ENCODE measurements at regions of chr4 and their contacts with region 1.

Region 1: DNA sequence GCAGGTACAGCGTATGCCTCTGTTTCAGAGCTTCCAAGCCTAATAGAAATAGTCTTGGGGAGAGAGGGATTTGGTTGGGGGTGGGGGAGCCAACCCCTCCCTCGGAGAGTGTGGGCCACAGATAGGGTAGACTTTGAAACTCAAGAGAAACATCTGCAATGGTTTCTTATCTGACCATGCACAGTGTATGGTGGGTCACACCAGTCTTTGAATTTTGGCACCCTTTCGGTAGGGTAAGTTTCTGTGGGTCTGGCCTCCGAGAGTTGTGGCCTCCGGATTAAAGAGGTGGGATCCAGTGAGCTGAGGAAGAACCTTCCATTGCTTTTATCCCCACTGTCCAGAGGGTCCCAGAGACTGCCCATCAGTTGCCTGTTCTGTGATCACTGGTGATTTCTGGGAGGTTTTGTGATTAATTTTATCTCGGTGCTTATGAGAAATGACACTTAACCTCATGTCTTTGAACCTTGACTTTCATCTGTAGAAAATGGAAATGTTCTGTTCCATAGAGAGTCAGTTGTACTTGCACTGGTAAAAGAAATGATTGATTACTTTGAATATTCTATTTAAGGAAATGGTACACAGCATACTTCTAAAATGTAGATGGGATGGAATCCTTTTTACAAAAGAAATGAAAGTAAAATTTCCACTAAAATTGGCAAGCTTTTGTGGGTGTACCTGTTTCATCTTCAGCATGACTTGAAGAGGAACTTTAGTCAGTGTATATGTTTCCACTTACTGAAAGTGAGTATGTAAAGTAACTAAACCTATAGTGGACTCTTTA is 62.7 kb downstream of the TMEM131L start:
- DNase-seq: peak in 1 of 14 experiments; percentile 30
- ATAC-seq: peak; percentile 21
- H3K4me3 ChIP-seq: peak overlapping the region; percentile 37
- H3K4me3 Mint-ChIP-seq: peak overlapping the region; percentile 75
- H3K27ac ChIP-seq: peak overlapping the region; percentile 39 to 69
- H3K27ac Mint-ChIP-seq: peak overlapping the region; percentile 91
- H3K4me1 ChIP-seq: peaks cover 83% of the 10 kb centered on the region
- H3K4me1 Mint-ChIP-seq: peaks cover 92% of the 10 kb centered on the region
- H3K27me3 ChIP-seq: no peaks in the 10 kb centered on the region
- H3K27me3 Mint-ChIP-seq: no peaks in the 10 kb centered on the region
- CTCF ChIP-seq: no peak

Region 2: DNA sequence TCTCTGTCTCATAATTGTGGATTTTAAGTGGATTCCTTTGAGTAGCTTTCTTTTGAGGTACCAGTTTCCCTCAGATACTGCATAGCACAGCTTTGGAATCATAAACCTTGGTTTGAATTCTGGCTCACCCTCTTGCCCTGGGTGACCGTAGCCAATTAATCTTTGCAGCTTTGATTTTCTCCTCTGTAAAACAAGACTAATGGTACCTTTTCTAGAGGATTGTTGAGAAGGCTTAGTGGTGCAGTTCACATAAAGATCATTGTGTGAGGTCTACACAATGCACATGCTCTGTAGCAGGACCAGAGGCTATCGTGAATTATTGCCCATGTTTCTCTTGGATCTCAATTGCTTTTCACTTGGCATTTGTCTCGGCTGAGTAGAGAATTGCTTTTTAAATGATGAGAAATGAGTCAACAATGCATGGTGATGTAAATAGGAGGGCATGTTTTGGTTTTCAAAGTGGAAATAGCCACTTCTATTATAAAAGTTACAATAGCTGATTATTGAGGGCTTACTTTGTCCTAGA is 14.8 kb before region 1 on chr4:
- CTCF ChIA-PET with region 1: interaction called, 8 read pairs
- POLR2A ChIA-PET with region 1: interaction called, 4 read pairs
- intact Hi-C with region 1: loop called in 1 of 2 experiments (anchors 2 kb)
- DNase-seq: no peak
- ATAC-seq: no peak
- H3K4me3 ChIP-seq: no peak overlapping the region
- H3K4me3 Mint-ChIP-seq: peak overlapping the region; percentile 25
- H3K27ac ChIP-seq: no peak overlapping the region
- H3K27ac Mint-ChIP-seq: peak overlapping the region; percentile 64
- H3K4me1 ChIP-seq: peaks cover 40% of the 10 kb centered on the region
- H3K4me1 Mint-ChIP-seq: peaks cover 83% of the 10 kb centered on the region
- H3K27me3 ChIP-seq: no peaks in the 10 kb centered on the region
- H3K27me3 Mint-ChIP-seq: no peaks in the 10 kb centered on the region
- CTCF ChIP-seq: no peak

Region 3: GRCh38 chr4:153564630-153565525 is 36.0 kb after region 1 on chr4:
- CTCF ChIA-PET with region 1: no interaction called
- POLR2A ChIA-PET with region 1: interaction called, 3 read pairs
- intact Hi-C with region 1: loop called (anchors 5 kb)
- DNase-seq: no peak
- ATAC-seq: no peak
- H3K4me3 ChIP-seq: no peak overlapping the region
- H3K4me3 Mint-ChIP-seq: no peak overlapping the region
- H3K27ac ChIP-seq: no peak overlapping the region
- H3K27ac Mint-ChIP-seq: peak overlapping the region; percentile 50
- H3K4me1 ChIP-seq: peaks cover 12% of the 10 kb centered on the region
- H3K4me1 Mint-ChIP-seq: peaks cover 70% of the 10 kb centered on the region
- H3K27me3 ChIP-seq: no peaks in the 10 kb centered on the region
- H3K27me3 Mint-ChIP-seq: no peaks in the 10 kb centered on the region
- CTCF ChIP-seq: no peak

Region 4: DNA sequence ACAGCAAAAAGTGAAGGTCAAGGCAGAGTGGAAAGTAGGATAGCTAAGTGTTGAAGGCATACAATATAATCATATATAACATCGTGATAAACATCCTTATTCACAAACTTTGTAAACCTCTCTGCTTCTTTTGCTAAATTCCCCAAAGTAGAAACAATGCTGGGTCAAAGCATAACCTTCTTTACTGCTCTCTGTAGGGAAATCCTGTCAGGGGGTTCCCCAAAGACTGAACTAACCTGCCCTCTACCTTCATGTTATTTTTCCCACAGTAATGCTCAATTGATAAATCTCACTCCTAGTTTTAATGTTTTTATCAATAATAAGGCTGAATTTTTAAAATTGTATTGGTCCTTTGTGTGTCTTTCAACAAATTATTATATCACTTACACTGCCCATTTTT is 907.0 kb after region 1 on chr4:
- CTCF ChIA-PET with region 1: no interaction called
- POLR2A ChIA-PET with region 1: no interaction called
- intact Hi-C with region 1: no loop called
- DNase-seq: no peak
- ATAC-seq: no peak
- H3K4me3 ChIP-seq: no peak overlapping the region
- H3K4me3 Mint-ChIP-seq: no peak overlapping the region
- H3K27ac ChIP-seq: no peak overlapping the region
- H3K27ac Mint-ChIP-seq: no peak overlapping the region
- H3K4me1 ChIP-seq: no peaks in the 10 kb centered on the region
- H3K4me1 Mint-ChIP-seq: no peaks in the 10 kb centered on the region
- H3K27me3 ChIP-seq: peaks cover 0 to 5% of the 10 kb centered on the region in 2 experiments
- H3K27me3 Mint-ChIP-seq: peaks cover 3% of the 10 kb centered on the region
- CTCF ChIP-seq: no peak